SK-N-SH (cell line): ENCODE measurements at regions of chr6 and their contacts with region 1.

Region 1: GRCh38 chr6:24283043-24283985 is 74.5 kb downstream of the DCDC2 start:
- DNase-seq: peak; percentile 78
- H3K4me3 ChIP-seq: peak overlapping the region in 1 of 2 experiments; percentile 40; a peak in 1 of 4 replicates
- H3K27ac ChIP-seq: no peak overlapping the region
- H3K4me1 ChIP-seq: peaks cover 0 to 7% of the 10 kb centered on the region in 2 experiments; a peak in 3 of 4 replicates
- H3K27me3 ChIP-seq: no peaks in the 10 kb centered on the region
- CTCF ChIP-seq: peak; percentile 69
- EP300 ChIP-seq: no peak
- RAD21 ChIP-seq: peak; percentile 64

Region 2: DNA sequence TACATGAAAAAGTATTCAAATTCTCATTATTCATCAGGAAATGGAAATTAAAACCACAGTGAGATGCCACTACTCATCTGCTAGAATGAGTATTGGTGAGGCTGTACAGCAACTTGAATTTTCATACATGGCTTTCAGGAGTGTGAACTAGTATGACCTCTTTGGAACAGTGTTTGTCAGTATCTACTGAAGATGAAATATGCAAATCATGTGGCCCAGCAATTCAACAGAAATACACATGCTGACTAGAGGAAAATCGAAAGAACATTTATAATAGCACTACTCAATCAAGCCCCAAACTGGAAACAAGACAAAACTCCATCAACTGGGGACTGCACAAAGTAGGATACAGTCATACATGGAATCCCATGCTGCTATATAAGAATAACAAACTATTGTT is 27.6 kb before region 1 on chr6:
- CTCF ChIA-PET with region 1: interaction called, 12 read pairs
- POLR2A ChIA-PET with region 1: no interaction called
- DNase-seq: no peak
- H3K4me3 ChIP-seq: no peak overlapping the region
- H3K27ac ChIP-seq: no peak overlapping the region
- H3K4me1 ChIP-seq: no peaks in the 10 kb centered on the region
- H3K27me3 ChIP-seq: no peaks in the 10 kb centered on the region
- CTCF ChIP-seq: no peak
- EP300 ChIP-seq: no peak
- RAD21 ChIP-seq: no peak

Region 3: DNA sequence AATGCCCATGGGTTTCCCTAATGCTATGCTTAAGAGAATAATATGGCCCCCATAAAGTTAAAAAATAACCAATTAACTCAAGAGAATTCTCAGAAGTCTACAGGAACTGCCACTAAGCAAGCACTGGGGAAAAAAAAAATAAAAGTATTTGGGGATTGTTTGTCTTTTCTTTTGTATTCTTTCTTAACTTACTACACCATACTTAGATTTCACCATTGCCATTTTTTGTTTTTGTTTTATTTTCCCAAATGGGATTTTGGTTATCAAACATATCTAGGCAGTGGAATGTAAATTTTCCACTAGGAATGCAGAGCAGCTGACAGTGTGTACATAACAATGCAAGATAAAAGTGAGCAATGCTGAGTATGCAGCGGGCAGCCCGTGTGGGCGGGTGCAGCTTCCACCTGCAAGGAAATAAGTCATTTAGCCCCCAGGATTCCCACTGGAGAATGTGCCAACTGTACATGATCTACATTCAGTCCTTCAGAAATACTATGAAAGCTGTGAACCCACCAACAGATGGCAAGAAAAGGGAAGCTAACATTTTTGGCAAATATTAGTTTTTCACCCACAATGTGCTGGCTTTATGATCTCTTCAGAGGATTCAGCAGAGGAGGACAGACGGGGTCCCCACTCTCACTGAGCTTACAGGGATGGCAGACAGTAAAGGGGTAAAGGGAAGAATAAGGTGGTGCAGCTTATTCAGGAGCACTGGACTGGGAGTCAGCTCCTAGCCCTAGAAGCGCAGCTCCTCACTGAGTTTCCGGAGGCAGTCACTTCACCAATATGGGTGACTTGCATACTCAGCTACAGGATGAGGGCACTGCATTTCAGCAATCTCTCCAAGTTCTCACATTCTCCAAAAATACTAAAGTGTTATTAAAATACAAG is 30.2 kb after region 1 on chr6:
- CTCF ChIA-PET with region 1: interaction called, 13 read pairs
- POLR2A ChIA-PET with region 1: no interaction called
- DNase-seq: no peak
- H3K4me3 ChIP-seq: no peak overlapping the region
- H3K27ac ChIP-seq: no peak overlapping the region
- H3K4me1 ChIP-seq: no peaks in the 10 kb centered on the region; a peak in 1 of 4 replicates
- H3K27me3 ChIP-seq: no peaks in the 10 kb centered on the region
- CTCF ChIP-seq: no peak
- EP300 ChIP-seq: no peak
- RAD21 ChIP-seq: no peak

Region 4: DNA sequence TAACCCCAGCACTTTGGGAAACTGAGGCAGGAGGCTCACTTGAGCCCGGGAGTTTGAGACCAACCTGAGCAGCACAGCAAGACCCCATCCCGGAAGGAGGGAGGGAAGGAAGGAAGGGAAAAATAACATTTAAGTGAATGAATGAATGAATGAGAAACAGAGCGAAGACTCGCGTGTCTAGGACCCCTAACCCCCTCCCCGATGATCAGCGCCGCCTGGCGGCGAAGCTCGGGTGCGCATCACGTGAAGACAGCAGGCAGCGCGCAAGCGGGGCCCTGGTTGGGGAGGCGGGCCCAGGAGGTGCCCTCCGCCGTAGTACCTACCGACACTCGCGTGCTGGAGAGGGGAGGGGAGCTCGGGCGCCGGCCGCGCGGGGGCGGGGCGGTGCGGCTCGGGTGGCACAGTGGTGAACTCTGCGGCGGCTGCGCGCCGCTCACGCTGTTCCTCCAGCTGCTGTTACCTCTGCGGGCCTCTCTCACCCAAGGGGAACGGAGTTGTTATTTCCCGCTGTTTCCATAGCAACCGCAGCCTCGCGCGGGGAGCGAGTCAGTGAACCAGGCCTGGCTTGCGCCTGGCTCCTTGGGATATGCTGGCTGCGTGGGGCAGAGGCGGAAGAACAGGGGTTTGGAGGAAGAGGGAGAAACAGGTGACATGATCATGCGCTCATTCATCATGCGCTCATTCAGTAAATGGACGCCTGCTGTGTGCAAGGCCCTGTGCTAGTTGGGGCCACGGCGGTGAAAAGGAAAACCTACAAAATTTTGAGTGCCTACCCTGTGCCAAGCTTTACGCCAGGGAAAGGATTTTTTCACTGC is 76.5 kb after region 1 on chr6:
- CTCF ChIA-PET with region 1: interaction called, 35 read pairs
- POLR2A ChIA-PET with region 1: no interaction called
- DNase-seq: peak; percentile 88
- H3K4me3 ChIP-seq: peak overlapping the region; percentile 54 to 74
- H3K27ac ChIP-seq: peak overlapping the region in 1 of 2 experiments; percentile 28; a peak in 1 of 4 replicates
- H3K4me1 ChIP-seq: peaks cover 0 to 4% of the 10 kb centered on the region in 2 experiments; a peak in 2 of 4 replicates
- H3K27me3 ChIP-seq: no peaks in the 10 kb centered on the region
- CTCF ChIP-seq: peak; percentile 86
- EP300 ChIP-seq: no peak
- RAD21 ChIP-seq: peak; percentile 45

Region 5: DNA sequence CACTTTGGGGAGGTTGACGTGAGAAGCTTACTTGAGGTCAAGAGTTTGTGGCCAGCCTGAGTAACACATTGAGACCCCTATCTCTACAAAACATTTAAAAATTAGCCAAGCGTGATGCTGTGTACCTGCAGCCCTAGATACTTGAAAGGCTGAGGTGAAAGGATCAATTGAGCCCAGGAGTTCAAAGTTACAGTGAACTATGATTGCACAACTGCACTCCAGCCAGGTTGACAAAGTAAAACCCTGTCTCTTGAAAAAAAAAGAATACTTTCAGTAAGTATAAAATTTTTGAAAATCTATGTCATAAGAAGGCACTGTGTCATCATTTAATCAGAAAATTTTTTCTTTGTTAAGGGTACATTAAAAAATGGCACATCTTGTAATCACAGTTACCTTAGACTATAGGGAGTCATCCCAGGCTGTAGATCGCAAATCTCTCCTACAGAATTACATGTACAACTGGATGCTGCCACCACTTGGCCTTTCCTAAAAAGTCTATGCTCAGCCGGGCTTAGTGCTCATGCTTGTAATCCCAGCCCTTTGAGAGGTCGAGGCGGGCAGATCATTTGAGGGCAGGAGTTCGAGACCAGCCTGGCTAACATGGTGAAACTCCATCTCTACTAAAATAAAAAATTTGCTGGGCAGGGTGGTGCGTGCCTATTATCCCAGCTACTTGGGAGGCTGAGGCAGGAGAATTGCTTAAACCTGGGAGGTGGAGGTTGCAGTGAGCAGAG is 102.4 kb after region 1 on chr6:
- CTCF ChIA-PET with region 1: interaction called, 64 read pairs
- POLR2A ChIA-PET with region 1: interaction called, 8 read pairs
- DNase-seq: no peak
- H3K4me3 ChIP-seq: no peak overlapping the region
- H3K27ac ChIP-seq: no peak overlapping the region
- H3K4me1 ChIP-seq: no peaks in the 10 kb centered on the region; a peak in 1 of 4 replicates
- H3K27me3 ChIP-seq: no peaks in the 10 kb centered on the region
- CTCF ChIP-seq: no peak
- EP300 ChIP-seq: no peak
- RAD21 ChIP-seq: no peak

Region 6: DNA sequence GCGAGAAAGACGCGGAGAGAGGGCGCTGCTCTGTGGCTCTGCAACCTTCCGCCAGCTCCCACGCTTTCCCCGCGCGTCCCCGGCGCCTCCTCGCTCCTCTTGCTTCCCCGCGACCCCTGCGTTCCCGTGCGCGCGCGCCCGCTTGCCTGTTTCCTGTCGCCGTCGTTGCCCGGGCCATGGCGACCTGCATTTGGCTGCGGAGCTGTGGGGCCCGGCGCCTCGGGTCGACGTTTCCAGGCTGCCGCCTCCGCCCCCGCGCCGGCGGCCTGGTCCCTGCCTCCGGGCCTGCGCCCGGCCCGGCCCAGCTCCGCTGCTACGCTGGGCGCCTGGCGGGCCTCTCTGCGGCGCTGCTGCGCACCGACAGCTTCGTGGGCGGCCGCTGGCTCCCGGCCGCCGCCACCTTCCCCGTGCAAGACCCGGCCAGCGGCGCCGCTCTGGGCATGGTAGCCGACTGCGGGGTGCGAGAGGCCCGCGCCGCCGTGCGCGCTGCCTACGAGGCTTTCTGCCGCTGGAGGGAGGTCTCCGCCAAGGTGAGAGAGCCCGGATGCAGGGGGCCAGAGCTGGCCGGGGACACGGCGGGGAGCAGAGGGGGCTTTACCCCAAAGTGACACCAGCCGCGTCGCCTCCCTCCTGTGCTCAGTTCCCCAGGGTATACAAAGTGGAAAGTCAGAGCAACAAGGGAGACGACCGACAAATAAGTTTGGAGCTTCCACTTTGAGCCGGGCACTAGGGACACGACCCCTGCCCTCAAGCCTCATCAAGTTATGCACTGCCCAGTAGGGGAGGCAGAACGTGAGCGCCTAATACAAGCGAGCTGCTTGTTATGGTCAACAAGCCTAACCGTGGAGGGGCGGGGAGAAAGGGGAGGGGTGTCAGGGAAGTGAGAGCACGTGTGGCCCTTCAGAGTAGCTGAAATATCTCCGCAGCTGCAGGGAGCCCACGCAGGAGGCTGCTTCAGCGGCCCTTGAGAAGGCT is 211.8 kb after region 1 on chr6 and contains the start of gene ALDH5A1:
- CTCF ChIA-PET with region 1: interaction called, 13 read pairs
- POLR2A ChIA-PET with region 1: no interaction called
- DNase-seq: peak; percentile 88
- H3K4me3 ChIP-seq: peak within 1 kb of the TSS; percentile 65 to 69
- H3K27ac ChIP-seq: peak within 1 kb of the TSS; percentile 28 to 67
- H3K4me1 ChIP-seq: peaks cover 0 to 10% of the 10 kb centered on the region in 2 experiments; a peak in 1 of 4 replicates
- H3K27me3 ChIP-seq: no peaks in the 10 kb centered on the region
- CTCF ChIP-seq: no peak; the same call in none of the 2 replicates
- EP300 ChIP-seq: no peak
- RAD21 ChIP-seq: peak; percentile 43
- polyA plus RNA-seq, gene ALDH5A1: 3.0 and 3.7 TPM in 2 replicates